ENCODE measurements at regions of chr9 and their contacts with region 1.

Region 1: GRCh38 chr9:134381671-134382516 is 55.6 kb downstream of the RXRA start:
- DNase-seq: peak in 1 of 3 donors; percentile 67
- ATAC-seq: peak in 3 of 4 donors; percentile 1
- H3K4me3 ChIP-seq: no peak overlapping the region
- H3K27ac ChIP-seq: peak overlapping the region; percentile 33 to 63 (median 44)
- H3K4me1 ChIP-seq: peaks cover 0 to 100% (median 59%) of the 10 kb centered on the region in 4 donors
- H3K27me3 ChIP-seq: no peaks in the 10 kb centered on the region
- CTCF ChIP-seq: peak; percentile 16 to 23 (median 18)
- POLR2A ChIP-seq: no peak

Region 2: GRCh38 chr9:134434894-134435506 is 53.1 kb after region 1 on chr9:
- intact Hi-C with region 1: loop called in 1 of 2 experiments (anchors 10 kb)
- DNase-seq: peak; percentile 94 to 98 (median 95)
- ATAC-seq: peak; percentile 68 to 76 (median 72)
- H3K4me3 ChIP-seq: peak overlapping the region in 1 of 3 donors; percentile 4
- H3K27ac ChIP-seq: peak overlapping the region; percentile 37 to 93 (median 73)
- H3K4me1 ChIP-seq: peaks cover 0 to 86% (median 43%) of the 10 kb centered on the region in 4 donors
- H3K27me3 ChIP-seq: no peaks in the 10 kb centered on the region
- CTCF ChIP-seq: no peak
- POLR2A ChIP-seq: no peak

Region 3: DNA sequence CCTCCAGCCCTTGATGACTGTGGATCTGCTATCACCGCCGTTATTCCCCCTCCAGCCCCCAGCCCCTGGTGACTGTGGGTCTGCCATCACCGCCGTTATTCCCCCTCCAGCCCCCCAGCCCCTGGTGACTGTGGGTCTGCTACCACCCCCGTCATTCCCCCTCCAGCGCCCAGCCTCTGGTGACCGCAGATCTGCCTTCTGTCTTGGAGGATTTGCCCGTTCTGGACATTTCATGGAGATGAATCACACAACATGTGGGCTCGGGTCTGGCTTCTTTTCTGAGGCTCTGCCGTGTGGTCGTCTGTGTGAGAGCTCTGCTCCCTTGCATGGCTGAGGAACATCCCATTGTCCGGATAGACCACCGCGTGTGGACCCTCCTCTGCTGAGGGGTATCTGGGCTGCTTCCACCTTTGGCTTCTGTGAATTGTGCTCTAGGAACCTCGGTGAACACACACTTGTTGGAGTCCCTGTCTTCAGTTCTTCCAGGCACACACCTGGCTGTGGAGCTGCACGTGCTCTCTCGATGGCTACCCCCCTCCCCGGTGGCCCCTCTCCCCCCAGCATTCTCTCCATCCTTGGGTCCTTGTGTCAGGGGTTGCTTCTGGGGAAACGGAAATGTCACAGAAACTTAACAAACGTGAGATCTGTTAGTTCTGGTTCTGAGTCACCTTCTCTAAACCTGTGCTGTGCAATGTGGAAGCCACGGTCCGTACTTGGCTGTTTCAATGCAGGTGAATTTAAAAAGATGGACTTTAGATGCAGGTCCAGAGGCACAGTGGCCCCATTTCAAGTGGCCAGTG is 154.4 kb after region 1 on chr9:
- intact Hi-C with region 1: no loop called
- DNase-seq: no peak
- ATAC-seq: no peak
- H3K4me3 ChIP-seq: no peak overlapping the region
- H3K27ac ChIP-seq: no peak overlapping the region
- H3K4me1 ChIP-seq: no peaks in the 10 kb centered on the region
- H3K27me3 ChIP-seq: no peaks in the 10 kb centered on the region
- CTCF ChIP-seq: no peak
- POLR2A ChIP-seq: no peak

Region 4: DNA sequence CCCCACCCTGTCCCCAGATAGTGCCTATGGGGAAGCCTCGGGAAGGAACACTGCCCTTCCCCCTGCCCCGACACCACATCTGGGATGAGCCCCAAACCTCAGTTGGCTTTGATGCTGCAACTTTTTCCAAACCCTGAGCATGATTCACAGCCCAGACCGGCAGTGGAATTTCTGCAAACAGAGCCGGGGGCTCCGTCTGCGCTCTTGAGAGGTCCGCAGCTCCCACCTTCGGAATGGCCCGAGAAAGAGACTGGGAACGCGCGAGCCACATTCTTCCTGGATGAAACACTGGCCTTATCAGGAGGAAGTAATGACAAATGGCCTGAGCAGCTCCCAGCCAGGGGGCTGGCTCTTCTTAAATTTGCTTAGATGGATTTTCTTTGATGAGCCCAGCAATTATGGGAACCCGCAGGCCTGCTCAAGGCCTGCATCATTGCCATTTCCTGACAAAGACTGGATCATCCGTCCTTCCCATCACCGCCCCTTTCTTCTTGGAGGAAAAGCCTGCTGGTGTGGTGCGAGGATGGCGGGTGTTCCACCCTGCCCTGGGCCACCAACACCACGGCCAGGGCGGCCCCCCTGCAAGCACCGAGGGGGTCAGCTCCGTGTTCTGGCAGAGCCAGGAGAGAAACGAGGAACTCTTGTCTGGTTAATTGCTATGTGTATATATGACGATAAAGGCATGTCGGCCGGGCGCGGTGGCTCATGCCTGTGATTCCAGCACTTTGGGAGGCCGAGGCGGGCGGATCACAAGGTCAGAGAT is 220.8 kb after region 1 on chr9:
- intact Hi-C with region 1: no loop called
- DNase-seq: peak in 1 of 3 donors; percentile 49
- ATAC-seq: peak; percentile 33 to 80 (median 56)
- H3K4me3 ChIP-seq: no peak overlapping the region
- H3K27ac ChIP-seq: no peak overlapping the region
- H3K4me1 ChIP-seq: no peaks in the 10 kb centered on the region
- H3K27me3 ChIP-seq: no peaks in the 10 kb centered on the region
- CTCF ChIP-seq: no peak
- POLR2A ChIP-seq: no peak

Measured in right lobe of liver (tissue), 6 donors.